HepG2 (cell line): ENCODE measurements at regions of chr3 and their contacts with region 1.

Region 1: GRCh38 chr3:32842531-32842931 is 24.7 kb downstream of the TRIM71 start:
- DNase-seq: no peak
- ATAC-seq: no peak
- H3K4me3 ChIP-seq: peak overlapping the region in 1 of 3 experiments; percentile 29; a peak in 1 of 6 replicates
- H3K27ac ChIP-seq: peak overlapping the region; percentile 100
- H3K4me1 ChIP-seq: peaks cover 99% of the 10 kb centered on the region
- H3K27me3 ChIP-seq: no peaks in the 10 kb centered on the region
- CTCF ChIP-seq: no peak
- EP300 ChIP-seq: no peak
- POLR2A ChIP-seq: no peak
- RAD21 ChIP-seq: no peak

Region 2: DNA sequence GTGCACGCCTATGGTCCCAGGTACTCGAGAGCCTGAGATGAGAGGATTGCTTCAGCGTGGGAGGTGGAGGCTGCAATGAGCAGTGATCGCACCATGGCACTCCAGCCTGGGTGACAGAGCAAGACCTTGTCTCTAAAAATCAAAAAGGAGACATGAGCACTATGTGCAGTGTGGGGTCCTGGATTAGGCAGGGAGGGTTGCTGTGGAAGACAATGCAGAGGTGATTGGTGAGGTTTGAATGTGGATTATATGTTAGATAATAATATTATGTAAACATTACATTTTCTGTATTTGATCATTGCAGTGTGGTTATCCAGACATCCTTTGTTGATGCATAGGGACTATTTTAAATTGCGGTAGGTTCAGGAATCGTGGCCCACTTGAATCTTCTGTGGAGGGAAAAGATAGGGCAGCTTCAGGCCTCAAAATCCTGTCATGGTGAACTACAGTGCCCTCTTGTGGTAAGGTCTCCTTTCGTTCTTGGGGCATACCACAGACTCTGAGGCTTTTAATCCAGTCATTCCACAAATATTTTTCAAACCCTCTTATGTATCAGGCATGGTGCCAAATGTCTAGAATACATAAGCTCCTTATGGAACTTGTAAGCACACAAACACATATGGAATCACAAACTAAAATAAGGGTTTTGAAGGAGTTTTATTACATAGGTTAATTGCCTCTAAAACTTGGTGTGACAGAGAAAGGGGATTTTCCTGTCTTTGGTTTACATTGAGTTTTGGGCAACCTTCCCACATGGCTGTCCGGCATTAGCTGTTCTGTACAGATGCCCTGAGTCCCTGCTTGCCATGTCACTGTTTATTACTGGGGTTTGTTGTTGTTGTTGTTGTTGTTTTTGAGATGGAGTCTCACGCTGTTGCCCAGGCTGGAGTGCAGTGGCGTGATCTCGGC is 698.4 kb before region 1 on chr3:
- CTCF ChIA-PET with region 1: no interaction called
- POLR2A ChIA-PET with region 1: no interaction called
- in situ Hi-C with region 1: no loop called
- intact Hi-C with region 1: no loop called
- DNase-seq: peak; percentile 78
- ATAC-seq: peak; percentile 84
- H3K4me3 ChIP-seq: no peak overlapping the region
- H3K27ac ChIP-seq: no peak overlapping the region
- H3K4me1 ChIP-seq: peaks cover 25% of the 10 kb centered on the region
- H3K27me3 ChIP-seq: no peaks in the 10 kb centered on the region
- CTCF ChIP-seq: peak; percentile 86
- EP300 ChIP-seq: no peak
- POLR2A ChIP-seq: no peak
- RAD21 ChIP-seq: peak; percentile 76

Region 3: GRCh38 chr3:32856355-32856889 is 13.9 kb after region 1 on chr3:
- CTCF ChIA-PET with region 1: interaction called, 3 read pairs
- POLR2A ChIA-PET with region 1: interaction called, 27 read pairs
- in situ Hi-C with region 1: no loop called
- intact Hi-C with region 1: loop called (anchors 2 kb)
- DNase-seq: peak; percentile 65
- ATAC-seq: peak; percentile 14
- H3K4me3 ChIP-seq: peak overlapping the region in 1 of 3 experiments; percentile 17; a peak in 1 of 6 replicates
- H3K27ac ChIP-seq: peak overlapping the region; percentile 76
- H3K4me1 ChIP-seq: peaks cover 100% of the 10 kb centered on the region
- H3K27me3 ChIP-seq: no peaks in the 10 kb centered on the region
- CTCF ChIP-seq: no peak
- EP300 ChIP-seq: no peak
- POLR2A ChIP-seq: no peak
- RAD21 ChIP-seq: no peak

Region 4: GRCh38 chr3:32888739-32889138 is 46.2 kb after region 1 on chr3:
- CTCF ChIA-PET with region 1: no interaction called
- POLR2A ChIA-PET with region 1: no interaction called
- in situ Hi-C with region 1: no loop called
- intact Hi-C with region 1: loop called (anchors 5 kb)
- DNase-seq: no peak
- ATAC-seq: no peak
- H3K4me3 ChIP-seq: no peak overlapping the region
- H3K27ac ChIP-seq: peak overlapping the region; percentile 41
- H3K4me1 ChIP-seq: peaks cover 50% of the 10 kb centered on the region
- H3K27me3 ChIP-seq: no peaks in the 10 kb centered on the region
- CTCF ChIP-seq: no peak
- EP300 ChIP-seq: no peak
- POLR2A ChIP-seq: no peak
- RAD21 ChIP-seq: no peak